GM12878 (cell line): ENCODE measurements at regions of chr19 and their contacts with region 1.

Region 1: GRCh38 chr19:39970675-39971379 is at the start of gene PSMC4:
- DNase-seq: peak; percentile 99
- ATAC-seq: peak; percentile 98
- H3K4me3 ChIP-seq: peak within 1 kb of the TSS; percentile 93
- H3K27ac ChIP-seq: peak within 1 kb of the TSS; percentile 89
- H3K4me1 ChIP-seq: peaks cover 10% of the 10 kb centered on the region; the same call in 1 of the 2 replicates
- H3K27me3 ChIP-seq: no peaks in the 10 kb centered on the region
- CTCF ChIP-seq: peak; percentile 86 to 96 (median 87); a peak in 5 of 6 replicates
- EP300 ChIP-seq: no peak
- POLR2A ChIP-seq: peak; percentile 97
- RAD21 ChIP-seq: peak; percentile 85
- polyA plus RNA-seq, gene PSMC4: 203 to 328 TPM

Region 2: GRCh38 chr19:39655613-39656012 is 315.2 kb before region 1 on chr19 and contains the start of gene LGALS16:
- CTCF ChIA-PET with region 1: no interaction called
- POLR2A ChIA-PET with region 1: no interaction called
- RAD21 ChIA-PET with region 1: no interaction called
- SMC1A ChIA-PET with region 1: no interaction called
- in situ Hi-C with region 1: no loop called
- intact Hi-C with region 1: no loop called
- DNase-seq: no peak
- ATAC-seq: no peak
- H3K4me3 ChIP-seq: no peak within 1 kb of the TSS
- H3K27ac ChIP-seq: no peak within 1 kb of the TSS
- H3K4me1 ChIP-seq: no peaks in the 10 kb centered on the region
- H3K27me3 ChIP-seq: no peaks in the 10 kb centered on the region
- CTCF ChIP-seq: no peak
- EP300 ChIP-seq: no peak
- POLR2A ChIP-seq: no peak
- RAD21 ChIP-seq: no peak
- polyA plus RNA-seq, gene LGALS16: not detected

Region 3: DNA sequence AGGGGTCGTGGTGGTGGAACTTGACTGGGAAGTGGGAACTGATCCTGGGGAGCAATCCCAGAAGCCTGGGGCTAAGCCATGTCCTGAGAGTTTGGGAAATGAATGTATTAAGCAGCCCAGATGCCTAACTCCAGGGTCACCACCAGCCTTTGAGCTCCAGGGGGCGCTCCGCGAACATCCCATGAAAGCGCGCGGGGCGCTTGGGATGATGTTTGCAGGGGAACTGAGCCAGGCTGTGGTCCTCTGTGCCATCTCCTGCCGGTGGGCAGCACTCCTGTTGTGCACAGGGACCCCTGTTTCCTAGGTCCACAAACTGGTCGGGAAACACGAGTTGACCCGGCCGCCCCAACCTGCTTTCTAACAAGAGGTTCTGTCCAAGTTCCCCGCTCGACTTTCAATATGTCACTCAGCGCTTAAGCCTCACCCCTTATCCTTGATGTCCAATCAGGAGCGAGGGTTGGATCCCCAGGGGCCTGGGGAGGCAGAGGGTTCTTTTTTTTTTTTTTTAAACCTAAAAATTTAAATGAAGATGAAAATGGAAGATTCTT is 177.8 kb before region 1 on chr19:
- CTCF ChIA-PET with region 1: interaction called, 32 read pairs
- POLR2A ChIA-PET with region 1: interaction called, 6 read pairs
- RAD21 ChIA-PET with region 1: interaction called, 36 read pairs
- SMC1A ChIA-PET with region 1: interaction called, 25 read pairs
- in situ Hi-C with region 1: no loop called
- intact Hi-C with region 1: loop called (anchors 2 kb)
- DNase-seq: peak; percentile 40
- ATAC-seq: peak; percentile 97
- H3K4me3 ChIP-seq: peak overlapping the region; percentile 66
- H3K27ac ChIP-seq: peak overlapping the region; percentile 40; the same call in 1 of the 2 replicates
- H3K4me1 ChIP-seq: peaks cover 16% of the 10 kb centered on the region
- H3K27me3 ChIP-seq: no peaks in the 10 kb centered on the region
- CTCF ChIP-seq: peak; percentile 91 to 96 (median 94)
- EP300 ChIP-seq: no peak
- POLR2A ChIP-seq: no peak
- RAD21 ChIP-seq: peak; percentile 96

Region 4: GRCh38 chr19:39878398-39878797 is 92.4 kb before region 1 on chr19:
- CTCF ChIA-PET with region 1: interaction called, 7 read pairs
- POLR2A ChIA-PET with region 1: no interaction called
- RAD21 ChIA-PET with region 1: interaction called, 10 read pairs
- SMC1A ChIA-PET with region 1: interaction called, 4 read pairs
- in situ Hi-C with region 1: no loop called
- intact Hi-C with region 1: no loop called
- DNase-seq: no peak
- ATAC-seq: no peak
- H3K4me3 ChIP-seq: no peak overlapping the region
- H3K27ac ChIP-seq: no peak overlapping the region
- H3K4me1 ChIP-seq: no peaks in the 10 kb centered on the region
- H3K27me3 ChIP-seq: no peaks in the 10 kb centered on the region
- CTCF ChIP-seq: no peak
- EP300 ChIP-seq: no peak
- POLR2A ChIP-seq: no peak
- RAD21 ChIP-seq: no peak

Region 5: GRCh38 chr19:39915101-39915847 is 55.6 kb before region 1 on chr19:
- CTCF ChIA-PET with region 1: interaction called, 23 read pairs
- POLR2A ChIA-PET with region 1: no interaction called
- RAD21 ChIA-PET with region 1: interaction called, 15 read pairs
- SMC1A ChIA-PET with region 1: interaction called, 19 read pairs
- in situ Hi-C with region 1: no loop called
- intact Hi-C with region 1: no loop called
- DNase-seq: no peak
- ATAC-seq: no peak
- H3K4me3 ChIP-seq: no peak overlapping the region
- H3K27ac ChIP-seq: no peak overlapping the region
- H3K4me1 ChIP-seq: no peaks in the 10 kb centered on the region
- H3K27me3 ChIP-seq: no peaks in the 10 kb centered on the region
- CTCF ChIP-seq: no peak
- EP300 ChIP-seq: no peak
- POLR2A ChIP-seq: no peak
- RAD21 ChIP-seq: no peak

Region 6: DNA sequence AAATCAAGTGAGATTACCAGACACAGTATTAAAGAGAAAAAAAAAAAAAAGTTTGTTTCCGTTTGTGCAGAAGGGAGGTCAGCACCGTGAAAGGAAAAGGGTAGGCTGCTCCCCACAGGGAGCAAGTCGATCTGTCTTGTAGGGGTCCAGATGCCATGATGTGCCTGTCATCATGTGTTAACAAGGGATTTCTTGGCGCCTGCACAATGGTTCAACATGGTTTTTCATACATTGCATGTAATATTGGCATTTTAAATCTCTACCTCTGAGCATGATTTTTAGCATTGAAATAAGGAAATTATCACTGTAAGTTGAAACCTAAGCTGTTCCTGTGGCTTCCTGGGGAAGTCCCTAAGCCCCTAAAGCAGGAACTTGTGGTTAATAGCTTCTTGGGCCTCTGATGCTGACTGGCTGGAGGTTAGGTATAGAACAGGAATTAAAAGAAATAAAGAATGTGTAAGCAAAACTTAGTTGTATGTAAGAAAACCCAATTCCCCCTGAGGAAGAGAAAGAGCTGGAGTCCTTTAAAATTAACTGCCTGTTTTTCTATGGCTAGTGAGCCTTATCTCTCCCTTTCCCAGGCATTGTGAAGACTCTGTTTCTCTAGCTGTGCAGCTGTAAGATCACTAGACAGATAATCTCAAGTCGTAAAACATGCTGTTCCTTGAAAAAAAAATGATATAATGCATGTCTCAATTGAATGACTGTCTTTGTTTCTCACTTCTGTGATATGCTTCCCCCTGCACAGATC is 29.0 kb before region 1 on chr19:
- CTCF ChIA-PET with region 1: interaction called, 84 read pairs
- POLR2A ChIA-PET with region 1: interaction called, 18 read pairs
- RAD21 ChIA-PET with region 1: interaction called, 73 read pairs
- SMC1A ChIA-PET with region 1: interaction called, 115 read pairs
- in situ Hi-C with region 1: no loop called
- intact Hi-C with region 1: loop called (anchors 2 kb)
- DNase-seq: peak; percentile 82
- ATAC-seq: peak; percentile 79
- H3K4me3 ChIP-seq: peak overlapping the region; percentile 47
- H3K27ac ChIP-seq: peak overlapping the region; percentile 84
- H3K4me1 ChIP-seq: peaks cover 24% of the 10 kb centered on the region
- H3K27me3 ChIP-seq: no peaks in the 10 kb centered on the region
- CTCF ChIP-seq: no peak
- EP300 ChIP-seq: 0 out of 4 replicates have a peak, but pooled peaks of 1 of the 2 experiments have one; percentile 38
- POLR2A ChIP-seq: no peak
- RAD21 ChIP-seq: no peak

Region 7: DNA sequence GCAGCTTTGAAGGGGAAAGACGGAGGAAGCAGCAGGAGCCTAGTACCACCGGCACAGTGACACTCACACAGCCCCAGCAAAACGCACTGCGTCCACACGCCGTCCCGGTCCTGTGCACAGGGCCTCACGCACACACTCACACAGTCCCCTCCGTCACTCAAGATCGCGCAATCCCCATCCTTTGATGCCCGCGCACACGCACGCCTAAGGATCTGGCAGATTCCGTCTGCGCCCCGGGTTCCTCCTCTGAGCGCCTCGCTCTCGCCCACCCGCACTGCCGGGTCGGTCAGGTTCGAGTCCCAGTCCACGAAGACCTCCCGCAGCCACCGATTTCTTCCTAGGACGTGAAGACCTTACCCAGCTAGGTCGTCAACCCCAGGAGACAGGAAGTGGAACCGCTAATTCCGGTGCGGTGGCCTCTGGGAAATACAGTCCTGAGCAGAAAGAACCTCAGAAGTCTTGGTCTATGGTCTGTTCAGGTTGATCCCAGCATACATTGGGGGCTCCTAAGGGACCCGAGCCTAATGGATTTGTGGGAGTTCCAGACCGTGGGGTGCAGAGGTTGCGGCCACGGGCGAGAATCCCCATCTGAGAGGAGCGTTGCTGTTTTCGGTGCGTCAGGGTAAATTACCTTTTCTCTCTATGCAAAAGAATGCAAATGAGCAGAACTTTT is 85.1 kb after region 1 on chr19 and contains the start of gene ZNF780B:
- CTCF ChIA-PET with region 1: no interaction called
- POLR2A ChIA-PET with region 1: interaction called, 9 read pairs
- RAD21 ChIA-PET with region 1: interaction called, 10 read pairs
- SMC1A ChIA-PET with region 1: interaction called, 17 read pairs
- in situ Hi-C with region 1: no loop called
- intact Hi-C with region 1: no loop called
- DNase-seq: peak; percentile 36
- ATAC-seq: peak; percentile 97
- H3K4me3 ChIP-seq: peak within 1 kb of the TSS; percentile 72
- H3K27ac ChIP-seq: peak within 1 kb of the TSS; percentile 69
- H3K4me1 ChIP-seq: no peaks in the 10 kb centered on the region; the same call in 1 of the 2 replicates
- H3K27me3 ChIP-seq: no peaks in the 10 kb centered on the region
- CTCF ChIP-seq: no peak
- EP300 ChIP-seq: no peak
- POLR2A ChIP-seq: peak; percentile 85
- RAD21 ChIP-seq: no peak
- polyA plus RNA-seq, gene ZNF780B: 9.3 to 10.7 TPM